ENCODE measurements at regions of chr7 and their contacts with region 1.

Region 1: GRCh38 chr7:25565949-25566348 is 337.7 kb upstream of the NPVF start:
- DNase-seq: peak; percentile 68
- ATAC-seq: no peak
- H3K4me3 Mint-ChIP-seq: no peak overlapping the region
- H3K27ac Mint-ChIP-seq: no peak overlapping the region
- H3K4me1 Mint-ChIP-seq: peaks cover 1% of the 10 kb centered on the region
- H3K27me3 Mint-ChIP-seq: peaks cover 8% of the 10 kb centered on the region

Region 2: DNA sequence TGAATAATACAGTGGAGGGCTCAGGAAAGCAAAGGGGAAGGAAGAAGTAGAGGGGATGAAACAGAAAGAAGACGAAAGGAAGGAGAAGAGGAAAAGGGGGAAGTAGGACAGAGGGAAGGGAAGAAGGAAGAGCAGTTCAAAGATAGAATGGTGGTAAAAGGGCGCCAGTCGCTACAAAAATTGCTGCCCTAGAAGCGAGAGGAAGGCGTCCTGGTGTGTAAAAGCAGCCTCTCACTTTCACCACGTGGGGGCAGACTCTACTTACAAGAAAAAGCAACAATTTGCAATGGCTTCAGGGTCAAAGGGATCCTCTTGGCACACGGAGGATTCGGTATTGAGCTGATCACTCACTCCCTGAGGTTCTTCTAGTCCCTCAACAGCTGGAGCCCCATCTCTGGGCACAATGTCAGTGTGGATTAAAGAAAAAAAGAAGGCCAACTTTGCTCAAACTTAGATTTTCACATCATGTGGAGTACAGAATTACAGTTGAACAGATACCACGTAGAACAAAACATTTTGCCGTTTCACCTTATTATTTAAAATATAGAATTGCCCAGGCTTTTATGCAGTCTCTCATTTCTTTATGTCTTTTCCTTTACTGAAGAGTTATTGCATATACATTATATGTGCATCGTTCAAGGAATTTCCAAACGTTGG is 306.2 kb before region 1 on chr7:
- CTCF ChIA-PET with region 1: interaction called, 85 read pairs
- DNase-seq: peak; percentile 72
- ATAC-seq: peak; percentile 77
- H3K4me3 Mint-ChIP-seq: no peak overlapping the region
- H3K27ac Mint-ChIP-seq: no peak overlapping the region
- H3K4me1 Mint-ChIP-seq: peaks cover 19% of the 10 kb centered on the region
- H3K27me3 Mint-ChIP-seq: peaks cover 10% of the 10 kb centered on the region

Region 3: GRCh38 chr7:25389489-25390106 is 176.4 kb before region 1 on chr7:
- CTCF ChIA-PET with region 1: interaction called, 51 read pairs
- DNase-seq: no peak
- ATAC-seq: no peak
- H3K4me3 Mint-ChIP-seq: no peak overlapping the region
- H3K27ac Mint-ChIP-seq: no peak overlapping the region
- H3K4me1 Mint-ChIP-seq: no peaks in the 10 kb centered on the region
- H3K27me3 Mint-ChIP-seq: peaks cover 23% of the 10 kb centered on the region

Region 4: DNA sequence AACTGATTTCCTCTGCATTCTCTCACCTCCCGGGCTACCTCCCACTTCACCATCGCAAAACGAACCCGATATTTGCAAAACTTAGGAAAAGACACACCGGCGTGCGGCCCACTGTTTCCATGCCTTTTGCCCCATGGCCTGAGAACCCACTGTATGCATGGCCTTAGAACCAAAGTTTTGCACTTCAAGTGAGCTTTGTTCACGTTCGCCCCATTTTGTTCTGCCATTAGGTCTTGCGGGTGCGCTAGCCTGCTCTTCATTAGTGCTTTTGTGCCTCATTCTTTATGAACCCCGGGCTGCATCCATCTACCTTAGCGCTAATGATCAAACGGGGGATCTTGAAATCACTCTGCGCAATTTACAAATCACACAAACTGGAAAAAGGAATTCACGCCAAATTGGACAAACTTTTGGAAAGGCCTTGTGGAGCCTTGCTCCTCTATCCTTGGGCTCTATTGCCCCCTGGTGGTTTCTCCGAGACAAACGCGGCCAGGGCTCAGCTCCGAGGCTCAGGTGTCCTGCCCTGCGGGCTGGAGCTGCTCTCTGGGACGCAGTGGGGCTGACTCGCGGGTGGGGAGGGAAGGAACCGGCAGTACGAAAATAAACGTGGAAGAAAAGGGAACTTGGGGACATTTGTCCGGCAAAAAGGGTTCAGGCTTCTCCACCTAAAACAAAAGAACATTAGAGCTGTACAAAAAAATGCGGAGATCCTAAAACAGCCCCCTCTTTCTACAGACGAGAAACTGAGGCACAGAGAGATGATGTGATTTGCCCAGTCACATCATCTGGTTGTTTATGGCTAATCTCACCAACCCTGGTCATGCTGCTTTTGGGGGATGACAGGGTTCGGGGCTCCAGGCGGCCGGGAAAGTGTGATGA is 285.6 kb after region 1 on chr7:
- CTCF ChIA-PET with region 1: interaction called, 17 read pairs
- DNase-seq: peak; percentile 75
- ATAC-seq: peak; percentile 45
- H3K4me3 Mint-ChIP-seq: peak overlapping the region; percentile 41
- H3K27ac Mint-ChIP-seq: peak overlapping the region; percentile 6
- H3K4me1 Mint-ChIP-seq: peaks cover 27% of the 10 kb centered on the region
- H3K27me3 Mint-ChIP-seq: peaks cover 71% of the 10 kb centered on the region